Left cardiac atrium (tissue), 4 donors: ENCODE measurements at regions of chr18 and their contacts with region 1.

Region 1: DNA sequence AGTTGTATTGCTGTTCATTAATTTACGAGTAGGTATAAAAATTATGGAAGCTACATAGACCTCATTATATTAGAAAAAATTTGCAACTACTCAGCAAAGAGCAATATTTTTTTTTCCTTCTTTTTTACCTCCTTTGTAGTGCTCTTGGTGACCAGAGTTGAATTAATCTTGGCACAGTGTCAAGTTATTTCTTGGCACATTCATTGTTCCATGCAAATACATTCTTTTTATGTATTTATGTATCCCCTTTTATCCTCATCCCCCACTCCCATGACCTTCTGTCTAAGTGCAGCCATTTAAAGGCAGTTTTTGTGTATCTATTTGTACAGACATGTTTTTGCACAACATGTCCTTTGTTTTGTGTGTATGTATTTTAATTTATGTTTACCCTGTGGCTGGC is 224.5 kb downstream of the CCDC102B start:
- DNase-seq: no peak
- ATAC-seq: no peak

Region 2: GRCh38 chr18:68362907-68363306 is 659.5 kb before region 1 on chr18:
- intact Hi-C with region 1: no loop called
- DNase-seq: no peak
- ATAC-seq: no peak

Region 3: DNA sequence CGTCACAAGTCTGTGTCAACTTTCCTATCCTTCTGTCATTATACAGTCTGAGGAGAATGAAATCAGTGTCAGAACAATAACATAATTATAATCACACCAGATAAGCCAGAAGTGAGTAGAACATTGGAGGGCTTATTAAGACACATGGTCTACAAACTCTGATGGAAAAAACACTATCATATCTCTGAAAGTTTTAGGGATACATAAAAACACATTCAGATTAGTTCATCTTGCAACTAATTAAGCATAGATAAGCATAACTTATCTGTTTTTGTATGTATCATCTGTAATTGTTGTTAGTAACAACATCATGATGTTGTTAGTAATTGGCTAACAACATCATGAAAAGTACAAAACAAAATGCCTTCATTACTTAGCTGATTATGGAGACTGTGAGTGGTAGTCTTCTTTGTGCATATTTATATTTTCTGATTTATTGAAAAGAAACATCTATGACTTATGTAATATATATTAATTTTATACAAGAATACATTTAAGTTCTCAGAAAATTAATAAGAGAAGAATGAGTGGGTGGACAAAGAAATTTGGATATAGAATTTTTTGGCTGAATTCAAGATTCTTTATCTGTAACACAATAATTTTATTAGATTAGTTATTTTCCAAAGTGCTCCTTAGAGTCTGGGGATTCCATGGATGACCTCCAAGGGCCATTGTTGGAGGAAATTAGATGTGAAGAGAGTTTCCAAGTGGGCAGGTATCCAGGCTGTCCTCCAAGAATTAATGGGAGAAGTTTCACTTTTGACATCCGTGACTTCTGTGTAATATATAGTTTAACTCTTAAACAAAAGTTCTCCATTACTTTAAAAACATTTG is 241.4 kb before region 1 on chr18:
- intact Hi-C with region 1: no loop called
- DNase-seq: no peak
- ATAC-seq: no peak

Region 4: DNA sequence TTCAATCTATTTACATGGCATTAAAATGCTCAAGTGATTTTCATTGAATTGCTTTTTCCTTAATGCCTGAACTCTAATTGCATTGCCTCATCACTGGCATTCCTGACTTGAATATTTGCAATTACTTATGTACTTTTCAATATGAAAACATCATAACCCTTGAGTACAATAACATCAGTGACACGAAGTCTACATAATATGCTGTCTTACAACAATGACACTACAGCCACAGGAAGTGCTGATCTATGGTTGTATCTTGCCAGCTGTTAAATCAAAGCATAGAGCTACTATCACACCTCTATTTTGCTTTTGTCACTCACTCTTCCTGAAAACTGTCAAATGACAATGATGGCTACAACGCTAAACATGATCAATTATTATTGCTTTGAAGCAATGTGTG is 67.7 kb before region 1 on chr18:
- intact Hi-C with region 1: loop called in 1 of 2 experiments (anchors 10 kb)
- DNase-seq: no peak
- ATAC-seq: no peak